Mammary epithelial cell (primary cell): ENCODE measurements at regions of chr15 and their contacts with region 1.

Region 1: DNA sequence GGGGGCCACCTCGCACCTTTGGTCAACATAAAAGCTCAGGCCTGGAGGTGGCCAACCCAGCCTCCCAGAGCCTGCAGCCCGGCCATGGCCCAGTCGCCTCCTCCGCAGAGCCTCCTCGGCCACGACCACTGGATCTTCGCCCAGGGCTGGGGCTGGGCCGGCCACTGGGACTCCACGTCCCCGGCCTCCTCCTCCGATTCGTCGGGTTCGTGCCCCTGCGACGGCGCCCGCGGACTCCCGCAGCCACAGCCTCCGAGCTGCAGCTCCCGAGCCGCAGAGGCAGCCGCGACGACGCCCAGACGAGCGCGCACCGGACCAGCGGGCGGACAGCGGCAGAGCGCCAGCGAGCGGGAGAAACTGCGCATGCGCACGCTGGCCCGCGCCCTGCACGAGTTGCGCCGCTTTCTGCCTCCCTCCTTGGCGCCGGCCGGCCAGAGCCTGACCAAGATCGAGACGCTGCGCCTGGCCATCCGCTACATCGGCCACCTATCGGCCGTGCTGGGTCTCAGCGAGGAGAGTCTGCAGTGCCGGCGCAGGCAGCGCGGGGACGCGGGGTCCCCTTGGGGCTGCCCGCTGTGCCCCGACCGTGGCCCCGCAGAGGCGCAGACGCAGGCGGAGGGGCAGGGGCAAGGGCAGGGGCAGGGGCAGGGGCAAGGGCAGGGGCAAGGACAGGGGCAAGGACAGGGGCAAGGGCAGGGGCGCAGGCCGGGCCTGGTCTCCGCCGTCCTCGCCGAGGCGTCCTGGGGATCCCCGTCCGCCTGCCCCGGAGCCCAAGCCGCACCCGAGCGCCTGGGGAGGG is at the start of gene MESP2:
- DNase-seq: peak; percentile 48
- H3K4me3 ChIP-seq: peak within 1 kb of the TSS in 2 of 3 experiments; percentile 37 to 40
- H3K27ac ChIP-seq: no peak within 1 kb of the TSS
- H3K4me1 ChIP-seq: peaks cover 43% of the 10 kb centered on the region
- H3K27me3 ChIP-seq: no peaks in the 10 kb centered on the region
- CTCF ChIP-seq: peak in 1 of 2 donors; percentile 25
- total RNA-seq, gene MESP2: 0.31 TPM in 1 of 2 donors, not detected in the other

Region 2: DNA sequence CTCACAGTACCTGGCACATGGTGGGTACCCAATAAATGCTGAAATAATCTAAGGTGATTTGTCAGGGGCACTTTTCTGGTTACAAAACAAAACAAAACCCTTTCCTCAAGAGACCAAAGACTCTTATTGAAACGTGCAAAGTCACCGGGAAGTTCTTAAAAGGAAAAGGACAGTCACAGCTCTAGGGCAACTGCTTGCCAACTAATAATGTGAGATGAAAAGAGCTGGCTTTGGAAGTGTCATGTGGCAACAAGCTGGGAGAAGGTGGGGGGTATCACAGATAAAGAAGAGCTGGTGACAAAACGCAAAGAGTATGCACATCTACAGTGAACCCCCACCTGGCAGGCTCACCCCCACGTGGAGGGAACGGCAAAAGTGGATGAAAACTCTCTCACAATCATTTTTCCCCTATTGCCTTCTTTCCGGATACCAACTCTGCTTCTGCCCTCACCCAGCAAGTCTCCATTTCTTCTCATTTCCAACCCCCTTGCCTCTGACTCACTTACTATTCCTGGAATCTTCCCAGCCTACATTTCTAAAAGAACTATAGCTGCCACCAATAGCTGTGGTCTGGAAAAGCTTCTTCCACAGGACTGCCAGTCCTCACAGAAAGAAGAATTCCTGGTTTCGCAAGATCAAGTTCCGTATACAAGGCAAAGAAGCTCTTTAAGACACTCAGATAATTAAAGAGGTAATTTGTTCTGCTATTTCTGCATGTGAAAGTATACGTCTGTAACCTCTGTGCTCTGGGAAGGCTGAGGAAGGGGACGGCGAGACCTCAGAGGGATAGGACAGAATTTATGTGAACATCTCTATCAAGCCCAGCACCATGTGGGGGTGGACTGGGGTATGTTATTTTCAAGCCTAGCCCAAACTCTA is 60.0 kb after region 1 on chr15:
- CTCF ChIA-PET with region 1: interaction called, 4 read pairs
- dilution Hi-C with region 1: no loop called
- in situ Hi-C with region 1: loop called in 1 of 2 experiments (anchors 5 kb)
- intact Hi-C with region 1: no loop called
- DNase-seq: peak; percentile 86
- H3K4me3 ChIP-seq: peak overlapping the region in 2 of 3 experiments; percentile 17 to 33
- H3K27ac ChIP-seq: peak overlapping the region; percentile 85
- H3K4me1 ChIP-seq: peaks cover 32% of the 10 kb centered on the region
- H3K27me3 ChIP-seq: no peaks in the 10 kb centered on the region
- CTCF ChIP-seq: no peak

Region 3: DNA sequence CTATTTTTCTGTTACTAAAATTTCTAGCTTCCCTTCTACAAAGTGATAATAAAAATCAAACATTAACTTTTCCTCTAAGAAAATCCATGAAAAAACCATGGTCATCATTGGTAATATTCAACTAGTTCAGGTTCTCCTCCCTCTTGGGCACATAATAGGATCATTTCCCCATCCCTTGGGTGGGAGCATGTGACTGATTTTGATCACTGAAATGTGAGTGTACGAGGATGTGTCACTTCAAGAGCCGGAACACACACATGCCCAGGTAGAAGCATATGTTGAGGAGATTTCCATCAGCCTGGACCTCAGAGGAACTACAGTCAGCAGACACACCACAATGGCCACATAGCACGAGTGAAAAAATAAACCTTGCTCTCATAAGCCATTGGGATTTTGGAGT is 81.2 kb after region 1 on chr15:
- CTCF ChIA-PET with region 1: interaction called, 3 read pairs
- dilution Hi-C with region 1: loop called (anchors 5 kb)
- in situ Hi-C with region 1: no loop called
- intact Hi-C with region 1: no loop called
- DNase-seq: no peak
- H3K4me3 ChIP-seq: no peak overlapping the region
- H3K27ac ChIP-seq: no peak overlapping the region
- H3K4me1 ChIP-seq: no peaks in the 10 kb centered on the region
- H3K27me3 ChIP-seq: no peaks in the 10 kb centered on the region
- CTCF ChIP-seq: no peak

Region 4: GRCh38 chr15:90001683-90002427 is 225.4 kb after region 1 on chr15:
- CTCF ChIA-PET with region 1: no interaction called
- dilution Hi-C with region 1: no loop called
- in situ Hi-C with region 1: no loop called
- intact Hi-C with region 1: no loop called
- DNase-seq: peak; percentile 59
- H3K4me3 ChIP-seq: peak overlapping the region; percentile 38 to 70 (median 64)
- H3K27ac ChIP-seq: peak overlapping the region; percentile 62
- H3K4me1 ChIP-seq: peaks cover 69% of the 10 kb centered on the region
- H3K27me3 ChIP-seq: no peaks in the 10 kb centered on the region
- CTCF ChIP-seq: no peak